Activated CD4-positive, alpha-beta memory T cell treated with anti-CD3 and anti-CD28 coated beads for 36 hours (primary cell): ENCODE measurements at regions of chr11 and their contacts with region 1.

Region 1: DNA sequence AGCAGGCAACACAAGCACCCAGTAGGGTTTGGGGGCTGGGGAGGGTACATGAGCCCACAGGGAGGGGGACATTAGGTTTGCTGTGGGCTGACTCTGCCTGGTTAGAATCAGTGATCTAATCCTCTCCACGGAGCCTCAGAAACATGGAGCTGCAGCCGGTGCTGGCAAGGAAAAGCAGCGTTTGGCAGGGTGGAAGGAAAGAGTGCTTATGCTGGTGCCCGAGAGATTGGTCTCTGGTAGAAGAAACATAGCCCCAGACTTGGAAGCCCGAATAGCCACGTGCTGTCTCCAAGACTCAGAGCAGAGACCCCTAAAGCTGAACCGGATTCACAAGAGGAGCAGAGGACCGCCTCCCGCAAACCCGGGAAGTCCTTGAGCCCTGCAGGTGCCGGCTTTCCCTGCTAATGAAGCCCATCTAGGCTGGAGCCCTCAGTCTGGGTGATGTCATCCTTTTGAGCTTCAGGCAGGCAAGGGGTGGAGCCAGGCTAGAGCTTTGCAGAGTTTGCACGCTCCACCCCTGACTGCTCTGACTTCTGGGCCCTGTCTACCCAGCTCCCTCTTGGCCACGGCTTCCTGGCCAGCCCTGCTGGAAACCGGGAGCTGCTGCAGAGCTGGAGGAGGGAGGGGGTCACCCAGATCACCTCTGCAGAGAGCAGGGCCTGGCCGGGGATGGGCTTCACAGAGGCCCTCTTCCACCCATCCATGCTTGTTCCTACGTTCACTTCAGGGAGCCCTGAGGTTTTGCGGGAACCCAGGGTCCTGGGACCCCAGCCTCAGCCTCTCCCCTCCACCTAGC is 35.0 kb upstream of the JAM3 start:
- DNase-seq: peak; percentile 77
- H3K4me3 Mint-ChIP-seq: peak overlapping the region; percentile 16
- H3K27ac Mint-ChIP-seq: no peak overlapping the region
- H3K4me1 Mint-ChIP-seq: peaks cover 46% of the 10 kb centered on the region
- H3K27me3 Mint-ChIP-seq: no peaks in the 10 kb centered on the region

Region 2: DNA sequence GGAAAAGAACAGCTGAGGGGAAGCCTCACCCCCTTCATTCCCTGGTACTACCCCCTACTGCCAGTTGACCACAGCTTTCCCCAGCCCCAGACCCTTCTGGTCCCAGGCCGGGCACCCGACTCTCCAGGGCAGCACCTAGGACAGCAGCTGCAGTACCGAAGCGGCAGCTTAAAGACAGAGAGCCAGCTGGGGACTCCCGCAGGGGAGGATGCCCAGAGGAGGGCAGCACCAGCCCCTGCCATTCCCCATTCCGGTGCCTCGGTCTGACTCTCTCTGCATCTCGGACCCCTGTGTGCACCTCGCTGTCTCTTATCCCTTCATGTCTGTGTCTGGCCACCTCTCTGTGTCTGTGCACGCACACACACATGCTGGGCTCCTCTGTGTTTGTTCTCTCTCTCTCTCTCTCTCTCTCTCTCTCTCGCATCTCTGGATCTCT is 86.6 kb before region 1 on chr11:
- CTCF ChIA-PET with region 1: interaction called, 5 read pairs
- POLR2A ChIA-PET with region 1: interaction called, 4 read pairs
- intact Hi-C with region 1: loop called (anchors 1 kb)
- DNase-seq: peak; percentile 83
- H3K4me3 Mint-ChIP-seq: peak overlapping the region; percentile 33
- H3K27ac Mint-ChIP-seq: peak overlapping the region; percentile 42
- H3K4me1 Mint-ChIP-seq: peaks cover 67% of the 10 kb centered on the region
- H3K27me3 Mint-ChIP-seq: no peaks in the 10 kb centered on the region

Region 3: GRCh38 chr11:134068829-134069425 is 35.0 kb after region 1 on chr11 and contains the start of gene JAM3:
- CTCF ChIA-PET with region 1: no interaction called
- POLR2A ChIA-PET with region 1: no interaction called
- intact Hi-C with region 1: loop called (anchors 2 kb)
- DNase-seq: peak; percentile 96
- H3K4me3 Mint-ChIP-seq: peak within 1 kb of the TSS; percentile 90
- H3K27ac Mint-ChIP-seq: no peak within 1 kb of the TSS
- H3K4me1 Mint-ChIP-seq: peaks cover 10% of the 10 kb centered on the region
- H3K27me3 Mint-ChIP-seq: peaks cover 6% of the 10 kb centered on the region
- total RNA-seq, gene JAM3: 6.3 to 9.0 TPM

Region 4: GRCh38 chr11:134331354-134332188 is 297.7 kb after region 1 on chr11 and contains the start of gene GLB1L2:
- CTCF ChIA-PET with region 1: no interaction called
- POLR2A ChIA-PET with region 1: no interaction called
- intact Hi-C with region 1: loop called (anchors 10 kb)
- DNase-seq: peak; percentile 82
- H3K4me3 Mint-ChIP-seq: peak within 1 kb of the TSS; percentile 67
- H3K27ac Mint-ChIP-seq: no peak within 1 kb of the TSS
- H3K4me1 Mint-ChIP-seq: peaks cover 10% of the 10 kb centered on the region
- H3K27me3 Mint-ChIP-seq: peaks cover 20% of the 10 kb centered on the region
- total RNA-seq, gene GLB1L2: 3.8 to 4.1 TPM